Heart right ventricle (tissue), 16 donors: ENCODE measurements at regions of chr14 and their contacts with region 1.

Region 1: GRCh38 chr14:21383848-21384493 is at the start of gene SUPT16H:
- DNase-seq: peak; percentile 96
- ATAC-seq: peak; percentile 97 to 99 (median 99)
- H3K4me3 ChIP-seq: peak within 1 kb of the TSS; percentile 57 to 94 (median 76)
- H3K27ac ChIP-seq: peak within 1 kb of the TSS; percentile 75 to 95 (median 90)
- H3K4me1 ChIP-seq: peaks cover 0 to 50% (median 27%) of the 10 kb centered on the region in 9 donors
- H3K27me3 ChIP-seq: no peaks in the 10 kb centered on the region
- CTCF ChIP-seq: no peak
- total RNA-seq, gene SUPT16H: 24.8 to 36.1 (median 30.6) TPM

Region 2: GRCh38 chr14:21233457-21234076 is 150.4 kb before region 1 on chr14:
- intact Hi-C with region 1: loop called in 1 of 10 experiments (anchors 10 kb)
- DNase-seq: no peak
- ATAC-seq: peak in 3 of 8 donors; percentile 50 to 63 (median 54)
- H3K4me3 ChIP-seq: no peak overlapping the region
- H3K27ac ChIP-seq: no peak overlapping the region
- H3K4me1 ChIP-seq: peaks cover 3 to 92% (median 69%) of the 10 kb centered on the region in 9 donors
- H3K27me3 ChIP-seq: no peaks in the 10 kb centered on the region
- CTCF ChIP-seq: peak in 7 of 9 donors; percentile 29 to 57 (median 41)

Region 3: GRCh38 chr14:21241218-21241819 is 142.7 kb before region 1 on chr14:
- intact Hi-C with region 1: loop called in 5 of 10 experiments (anchors 5 to 10 kb)
- DNase-seq: no peak
- ATAC-seq: no peak
- H3K4me3 ChIP-seq: no peak overlapping the region
- H3K27ac ChIP-seq: peak overlapping the region in 1 of 10 donors; percentile 52
- H3K4me1 ChIP-seq: peaks cover 10 to 87% (median 49%) of the 10 kb centered on the region in 9 donors
- H3K27me3 ChIP-seq: no peaks in the 10 kb centered on the region
- CTCF ChIP-seq: peak in 8 of 9 donors; percentile 22 to 59 (median 46)

Region 4: DNA sequence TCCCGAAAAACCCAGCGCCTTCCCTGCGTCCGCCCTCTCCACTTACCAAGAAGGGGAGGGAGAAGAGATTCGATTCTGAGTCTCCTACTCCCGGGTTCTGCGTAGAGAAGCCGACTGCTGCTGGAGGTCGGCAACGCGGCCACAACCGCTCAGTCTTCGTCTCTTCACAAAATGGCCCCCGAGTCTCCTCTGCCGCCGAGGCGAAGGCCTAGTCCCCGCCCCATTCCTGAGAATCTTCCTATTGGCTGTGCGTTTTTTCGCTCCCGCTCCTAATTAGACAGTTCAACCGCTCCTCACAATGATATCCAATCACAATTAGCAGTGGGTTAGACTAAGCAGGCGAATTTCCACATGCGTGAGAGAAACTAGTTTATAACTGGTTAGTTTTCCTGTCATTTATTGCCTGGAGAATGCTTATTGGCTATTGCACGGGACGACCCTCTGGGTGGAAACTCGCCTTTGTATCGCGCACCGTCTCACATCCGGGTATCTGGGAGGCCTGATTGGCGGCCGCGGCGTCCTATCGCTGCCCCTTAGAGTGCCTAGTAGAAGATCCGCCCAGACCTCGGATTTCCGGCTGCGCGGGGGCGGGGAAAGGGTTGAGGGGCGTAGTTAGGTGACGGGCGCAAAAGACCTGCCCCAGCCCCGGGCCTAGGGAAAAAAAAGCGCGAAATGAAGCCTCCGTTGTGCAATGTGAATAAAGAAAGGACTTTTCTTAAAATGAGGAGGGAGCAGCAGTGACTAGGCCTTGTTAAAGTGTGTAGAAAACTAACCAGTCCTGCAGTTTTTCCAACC is 114.5 kb before region 1 on chr14 and contains the start of gene HNRNPC:
- intact Hi-C with region 1: loop called in 2 of 10 experiments (anchors 10 kb)
- DNase-seq: peak; percentile 100
- ATAC-seq: peak; percentile 96 to 99 (median 98)
- H3K4me3 ChIP-seq: peak within 1 kb of the TSS; percentile 62 to 97 (median 79)
- H3K27ac ChIP-seq: peak within 1 kb of the TSS; percentile 83 to 97 (median 92)
- H3K4me1 ChIP-seq: peaks cover 4 to 49% (median 43%) of the 10 kb centered on the region in 9 donors
- H3K27me3 ChIP-seq: no peaks in the 10 kb centered on the region
- CTCF ChIP-seq: no peak
- total RNA-seq, gene HNRNPC: 227 to 300 (median 259) TPM

Region 5: DNA sequence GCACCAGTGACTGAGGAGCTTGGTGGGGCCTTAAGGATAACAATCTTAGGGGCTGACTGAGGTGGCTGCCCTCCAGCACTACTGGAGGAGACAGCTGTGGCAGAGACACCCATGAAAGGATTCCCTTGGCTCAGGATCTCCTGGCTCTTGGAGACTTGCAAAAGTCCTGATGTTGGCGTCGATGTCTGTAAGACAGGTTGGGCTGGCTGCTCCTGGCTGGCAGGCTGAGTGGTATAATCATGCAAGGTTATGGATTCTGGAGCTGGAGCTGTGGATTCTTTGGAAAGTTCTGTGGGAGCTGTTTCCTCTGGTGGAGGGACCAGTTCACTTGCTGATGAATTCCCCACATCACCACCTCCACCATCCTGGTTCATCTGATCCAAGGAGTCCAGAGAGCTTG is 47.2 kb after region 1 on chr14:
- intact Hi-C with region 1: loop called in 2 of 10 experiments (anchors 5 kb)
- DNase-seq: no peak
- ATAC-seq: no peak
- H3K4me3 ChIP-seq: no peak overlapping the region
- H3K27ac ChIP-seq: no peak overlapping the region
- H3K4me1 ChIP-seq: peaks cover 0 to 32% (median 16%) of the 10 kb centered on the region in 9 donors
- H3K27me3 ChIP-seq: no peaks in the 10 kb centered on the region
- CTCF ChIP-seq: no peak

Region 6: GRCh38 chr14:21437063-21437901 is 53.3 kb after region 1 on chr14:
- intact Hi-C with region 1: loop called in 2 of 10 experiments (anchors 5 kb)
- DNase-seq: peak; percentile 98 to 100
- ATAC-seq: peak; percentile 99 to 100 (median 100)
- H3K4me3 ChIP-seq: peak overlapping the region; percentile 46 to 92 (median 82)
- H3K27ac ChIP-seq: peak overlapping the region; percentile 49 to 95 (median 90)
- H3K4me1 ChIP-seq: peaks cover 0 to 37% (median 28%) of the 10 kb centered on the region in 9 donors
- H3K27me3 ChIP-seq: no peaks in the 10 kb centered on the region
- CTCF ChIP-seq: no peak

Region 7: DNA sequence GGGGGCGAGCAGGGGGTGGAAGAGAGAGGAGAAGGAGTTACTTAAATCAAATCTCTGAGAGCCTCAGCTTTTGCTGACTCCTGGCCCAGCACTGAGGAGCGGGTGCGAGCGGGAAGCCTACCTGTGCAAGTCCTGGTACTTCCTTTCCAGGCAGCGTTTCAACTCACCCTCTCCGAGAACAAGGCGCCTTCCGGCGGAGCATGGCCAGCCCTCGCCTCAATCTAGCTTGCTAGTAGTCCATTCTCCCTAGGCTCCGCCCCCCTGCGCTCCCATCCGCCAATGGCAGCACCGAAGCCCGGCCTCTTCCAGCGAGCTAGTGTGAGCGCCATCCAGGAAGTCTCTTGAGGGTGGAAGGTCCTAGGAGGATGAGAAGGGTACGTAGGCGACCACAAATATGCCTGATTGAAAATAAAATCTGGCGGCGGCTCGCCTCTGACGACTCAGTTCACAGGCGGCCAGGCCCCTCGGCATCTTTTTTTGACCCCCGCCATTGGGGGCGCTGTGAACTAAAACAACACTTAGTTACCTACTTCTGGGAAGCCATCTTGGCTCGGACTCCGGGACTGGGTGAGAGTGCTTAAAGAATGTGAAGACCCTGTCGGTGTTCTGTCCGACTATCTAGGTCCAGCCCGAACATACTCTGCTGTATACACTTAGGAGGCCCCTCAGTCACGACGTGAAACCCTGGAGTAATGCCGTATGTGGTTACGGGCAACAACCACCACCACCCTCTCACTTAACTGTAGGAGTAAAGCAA is 72.1 kb after region 1 on chr14 and contains the start of gene CHD8:
- intact Hi-C with region 1: loop called in 1 of 10 experiments (anchors 10 kb)
- DNase-seq: peak; percentile 99 to 100
- ATAC-seq: peak; percentile 99 to 100 (median 100)
- H3K4me3 ChIP-seq: peak within 1 kb of the TSS; percentile 77 to 93 (median 87)
- H3K27ac ChIP-seq: peak within 1 kb of the TSS; percentile 87 to 97 (median 94)
- H3K4me1 ChIP-seq: peaks cover 6 to 32% (median 25%) of the 10 kb centered on the region in 9 donors
- H3K27me3 ChIP-seq: no peaks in the 10 kb centered on the region
- CTCF ChIP-seq: peak; percentile 24 to 79 (median 69)
- total RNA-seq, gene CHD8: 31.1 to 47.5 (median 40.1) TPM

Region 8: DNA sequence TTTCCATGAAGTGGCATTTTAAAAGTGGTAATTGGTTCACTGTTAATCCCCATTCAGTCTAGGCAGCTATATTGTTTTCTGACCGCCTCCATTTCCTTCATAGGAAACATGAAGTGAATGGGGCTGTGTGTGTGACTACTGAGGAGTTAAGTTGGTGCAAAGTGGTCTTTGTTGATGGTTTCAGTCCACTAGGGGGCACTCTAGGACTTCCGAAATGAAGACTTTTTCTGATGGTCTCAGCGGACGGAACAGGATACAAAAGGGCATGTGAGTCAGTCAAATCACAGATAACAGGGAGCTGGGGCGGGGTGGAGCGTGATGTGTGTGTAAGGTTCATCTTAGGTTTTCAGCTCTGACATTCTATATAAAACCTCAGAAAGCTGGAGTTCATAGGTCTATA is 529.8 kb after region 1 on chr14:
- intact Hi-C with region 1: no loop called
- DNase-seq: peak in 1 of 2 donors; percentile 46
- ATAC-seq: peak in 2 of 8 donors; percentile 46 to 53
- H3K4me3 ChIP-seq: no peak overlapping the region
- H3K27ac ChIP-seq: no peak overlapping the region
- H3K4me1 ChIP-seq: peaks cover 0 to 6% (median 0%) of the 10 kb centered on the region in 9 donors
- H3K27me3 ChIP-seq: peaks cover 0 to 12% (median 0%) of the 10 kb centered on the region in 7 donors
- CTCF ChIP-seq: peak in 7 of 9 donors; percentile 39 to 59 (median 45)

Region 9: GRCh38 chr14:22850944-22851764 is 1467.2 kb after region 1 on chr14:
- intact Hi-C with region 1: no loop called
- DNase-seq: peak; percentile 89 to 92
- ATAC-seq: peak; percentile 77 to 92 (median 86)
- H3K4me3 ChIP-seq: no peak overlapping the region
- H3K27ac ChIP-seq: peak overlapping the region; percentile 23 to 92 (median 77)
- H3K4me1 ChIP-seq: peaks cover 19 to 73% (median 59%) of the 10 kb centered on the region in 9 donors
- H3K27me3 ChIP-seq: no peaks in the 10 kb centered on the region
- CTCF ChIP-seq: no peak